GM12878 (cell line): ENCODE measurements at regions of chr12 and their contacts with region 1.

Region 1: DNA sequence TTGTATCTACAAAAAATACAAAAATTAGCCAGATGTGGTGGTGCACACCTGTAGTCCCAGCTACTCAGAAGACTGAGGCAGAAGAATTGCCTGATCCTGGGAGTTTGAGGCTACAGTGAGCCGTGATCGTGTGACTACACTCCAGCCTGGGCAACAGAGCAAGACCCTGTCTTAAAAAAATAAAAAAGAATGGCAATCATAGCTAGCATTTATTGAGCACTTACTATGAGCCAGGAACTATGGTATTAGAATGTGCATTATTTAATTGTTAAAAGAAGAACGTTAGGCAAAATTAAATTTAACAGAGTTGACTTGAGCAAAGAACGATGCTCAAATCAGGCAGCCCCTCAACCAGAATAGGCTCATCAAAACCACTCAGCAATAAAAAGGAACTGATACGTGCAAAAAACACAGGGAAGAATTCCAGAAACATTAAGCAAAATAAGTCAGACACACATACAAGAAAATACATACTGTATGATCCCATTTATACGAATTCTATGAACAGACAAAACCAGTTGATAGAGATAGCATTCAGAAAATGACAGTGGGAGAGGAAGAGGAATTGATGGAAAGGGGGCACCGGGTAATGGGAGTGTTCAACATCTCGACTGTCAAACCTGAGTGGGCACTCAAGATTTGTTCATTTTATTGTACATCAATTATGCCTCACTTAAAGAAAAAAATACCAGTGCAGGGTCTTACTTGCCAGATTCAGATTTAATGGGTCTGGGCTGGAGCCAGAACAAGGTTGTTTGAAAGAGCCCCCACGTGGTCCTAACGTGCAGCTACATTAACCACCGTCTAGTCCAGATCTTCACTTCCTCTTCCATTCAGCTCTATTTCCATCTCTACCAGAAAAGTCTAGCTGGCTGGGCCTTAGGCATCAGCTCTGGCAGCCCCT is 8.0 kb downstream of the SCNN1A start:
- DNase-seq: peak; percentile 39
- ATAC-seq: peak; percentile 94
- H3K4me3 ChIP-seq: no peak overlapping the region
- H3K27ac ChIP-seq: no peak overlapping the region
- H3K4me1 ChIP-seq: peaks cover 13% of the 10 kb centered on the region; the same call in 1 of the 2 replicates
- H3K27me3 ChIP-seq: no peaks in the 10 kb centered on the region
- CTCF ChIP-seq: peak; percentile 40 to 46 (median 41); a peak in 5 of 6 replicates
- EP300 ChIP-seq: no peak
- POLR2A ChIP-seq: no peak
- RAD21 ChIP-seq: peak; percentile 36; the same call in 1 of the 2 replicates

Region 2: GRCh38 chr12:6323340-6323994 is 43.9 kb before region 1 on chr12:
- CTCF ChIA-PET with region 1: interaction called, 21 read pairs
- POLR2A ChIA-PET with region 1: no interaction called
- RAD21 ChIA-PET with region 1: interaction called, 12 read pairs
- SMC1A ChIA-PET with region 1: interaction called, 15 read pairs
- in situ Hi-C with region 1: no loop called
- intact Hi-C with region 1: no loop called
- DNase-seq: peak; percentile 71
- ATAC-seq: peak; percentile 87
- H3K4me3 ChIP-seq: no peak overlapping the region
- H3K27ac ChIP-seq: peak overlapping the region; percentile 79
- H3K4me1 ChIP-seq: peaks cover 31% of the 10 kb centered on the region
- H3K27me3 ChIP-seq: no peaks in the 10 kb centered on the region
- CTCF ChIP-seq: peak; percentile 38 to 45 (median 45); a peak in 5 of 6 replicates
- EP300 ChIP-seq: peak; percentile 46 to 53; a peak in 1 of 4 replicates
- POLR2A ChIP-seq: 0 out of 2 replicates have a peak, but pooled peaks have one; percentile 18
- RAD21 ChIP-seq: peak; percentile 34

Region 3: DNA sequence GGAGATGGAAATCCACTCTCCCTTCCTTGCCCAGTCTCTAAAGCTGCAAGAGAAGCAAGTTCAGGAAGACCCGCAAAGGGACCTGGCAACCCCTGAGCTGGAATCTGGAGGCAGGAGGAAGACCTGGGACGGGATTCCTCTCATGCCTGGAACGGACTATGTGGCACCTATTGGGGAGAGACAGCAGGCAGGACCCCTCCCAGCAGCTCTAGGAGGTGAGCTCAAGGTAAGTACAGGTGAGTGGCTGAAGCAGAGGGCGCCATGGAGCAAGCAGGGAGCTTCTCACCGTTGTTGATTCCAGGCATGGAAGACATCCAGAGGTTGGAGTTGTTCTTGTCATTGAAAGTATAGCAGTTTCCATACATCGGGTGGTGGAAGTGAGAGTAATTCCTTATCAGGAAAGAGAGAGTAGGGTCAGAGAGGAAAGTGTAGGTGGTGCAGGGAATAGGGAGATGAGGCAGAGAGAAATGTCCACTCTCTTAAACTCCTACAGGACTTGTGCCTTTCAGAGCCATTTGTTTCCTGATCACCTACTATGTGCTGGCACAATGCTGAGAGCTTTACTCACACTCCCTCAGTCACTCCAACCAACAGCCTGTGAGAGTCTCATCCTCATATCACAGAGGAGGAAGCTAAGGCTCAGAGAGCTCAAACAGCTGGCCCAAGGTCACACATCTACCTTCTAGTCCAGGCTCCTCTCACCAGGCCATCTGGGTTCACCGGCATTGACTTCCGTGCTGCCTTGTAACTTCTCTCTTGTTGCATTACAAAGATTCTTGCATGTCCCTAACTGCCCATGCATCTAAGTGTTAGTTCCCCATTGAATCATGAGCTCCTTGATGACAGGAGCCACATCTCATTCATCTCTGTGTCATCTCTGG is 11.6 kb before region 1 on chr12:
- CTCF ChIA-PET with region 1: interaction called, 10 read pairs
- POLR2A ChIA-PET with region 1: no interaction called
- RAD21 ChIA-PET with region 1: interaction called, 3 read pairs
- SMC1A ChIA-PET with region 1: interaction called, 13 read pairs
- in situ Hi-C with region 1: no loop called
- intact Hi-C with region 1: no loop called
- DNase-seq: no peak
- ATAC-seq: peak; percentile 39
- H3K4me3 ChIP-seq: no peak overlapping the region
- H3K27ac ChIP-seq: no peak overlapping the region
- H3K4me1 ChIP-seq: no peaks in the 10 kb centered on the region
- H3K27me3 ChIP-seq: no peaks in the 10 kb centered on the region; a peak in 1 of 4 replicates
- CTCF ChIP-seq: no peak
- EP300 ChIP-seq: no peak
- POLR2A ChIP-seq: no peak
- RAD21 ChIP-seq: no peak

Region 4: GRCh38 chr12:6507102-6507998 is 140.0 kb after region 1 on chr12:
- CTCF ChIA-PET with region 1: no interaction called
- POLR2A ChIA-PET with region 1: no interaction called
- RAD21 ChIA-PET with region 1: no interaction called
- SMC1A ChIA-PET with region 1: no interaction called
- in situ Hi-C with region 1: no loop called
- intact Hi-C with region 1: no loop called
- DNase-seq: no peak
- ATAC-seq: no peak
- H3K4me3 ChIP-seq: no peak overlapping the region
- H3K27ac ChIP-seq: no peak overlapping the region
- H3K4me1 ChIP-seq: no peaks in the 10 kb centered on the region
- H3K27me3 ChIP-seq: no peaks in the 10 kb centered on the region
- CTCF ChIP-seq: no peak
- EP300 ChIP-seq: no peak
- POLR2A ChIP-seq: no peak
- RAD21 ChIP-seq: no peak